Gastrocnemius medialis (tissue), 4 donors: ENCODE measurements at regions of chr10 and their contacts with region 1.

Region 1: GRCh38 chr10:30186371-30186875 is 127.0 kb upstream of the JCAD start:
- DNase-seq: no peak
- ATAC-seq: peak; percentile 29 to 62
- H3K4me3 ChIP-seq: peak overlapping the region; percentile 10 to 41 (median 30)
- H3K27ac ChIP-seq: peak overlapping the region; percentile 59 to 72 (median 67)
- H3K4me1 ChIP-seq: peaks cover 0 to 3% of the 10 kb centered on the region in 2 donors
- H3K27me3 ChIP-seq: no peaks in the 10 kb centered on the region
- CTCF ChIP-seq: peak in 1 of 5 experiments; percentile 14
- POLR2A ChIP-seq: no peak

Region 2: GRCh38 chr10:30059209-30060107 is 127.0 kb before region 1 on chr10 and contains the start of gene JCAD:
- in situ Hi-C with region 1: no loop called
- intact Hi-C with region 1: loop called (anchors 10 kb)
- DNase-seq: peak; percentile 38 to 60
- ATAC-seq: peak; percentile 73 to 80
- H3K4me3 ChIP-seq: peak within 1 kb of the TSS; percentile 66 to 84 (median 68)
- H3K27ac ChIP-seq: peak within 1 kb of the TSS; percentile 67 to 81 (median 76)
- H3K4me1 ChIP-seq: peaks cover 0 to 5% of the 10 kb centered on the region in 2 donors
- H3K27me3 ChIP-seq: no peaks in the 10 kb centered on the region
- CTCF ChIP-seq: peak in 2 of 5 experiments; percentile 16 to 23
- POLR2A ChIP-seq: peak; percentile 50 to 76
- total RNA-seq, gene JCAD: 6.0 to 12.1 (median 6.5) TPM

Region 3: DNA sequence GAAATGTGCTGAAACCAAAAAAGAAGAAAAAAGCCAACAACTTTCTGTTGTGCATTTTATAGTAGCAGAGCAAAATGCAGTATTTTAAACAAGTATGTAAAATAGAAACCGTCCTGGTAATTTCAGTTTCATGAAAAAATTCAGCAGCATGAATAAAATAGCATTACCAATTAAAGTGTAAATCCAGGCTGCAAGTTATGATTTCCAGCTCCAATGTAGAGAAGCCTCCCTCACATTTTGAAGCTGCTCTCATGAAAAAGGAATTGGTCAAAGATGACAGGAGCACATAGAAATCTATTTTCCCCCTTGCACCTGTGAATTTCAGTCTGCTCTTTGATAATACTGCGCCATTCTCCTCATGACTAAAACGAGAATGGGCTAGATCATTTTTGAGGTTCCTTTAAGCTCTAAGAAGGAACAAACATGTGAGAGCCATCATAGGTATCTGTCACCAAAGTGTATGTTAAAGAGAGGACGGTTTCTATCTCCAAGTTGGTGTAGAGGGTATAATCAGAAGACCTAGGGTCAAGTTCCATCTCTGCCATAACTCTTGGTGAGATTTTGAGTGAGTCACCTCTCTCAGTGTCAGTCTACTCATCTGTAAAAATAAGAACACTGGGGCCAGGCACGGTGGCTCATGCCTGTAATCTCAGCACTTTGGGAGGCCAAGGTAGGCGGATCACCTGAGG is 55.1 kb after region 1 on chr10:
- in situ Hi-C with region 1: no loop called
- intact Hi-C with region 1: loop called (anchors 5 kb)
- DNase-seq: no peak
- ATAC-seq: no peak
- H3K4me3 ChIP-seq: no peak overlapping the region
- H3K27ac ChIP-seq: no peak overlapping the region
- H3K4me1 ChIP-seq: no peaks in the 10 kb centered on the region
- H3K27me3 ChIP-seq: no peaks in the 10 kb centered on the region
- CTCF ChIP-seq: no peak
- POLR2A ChIP-seq: no peak